Right ventricle myocardium inferior (tissue), 1 donor: ENCODE measurements at regions of chr10 and their contacts with region 1.

Region 1: DNA sequence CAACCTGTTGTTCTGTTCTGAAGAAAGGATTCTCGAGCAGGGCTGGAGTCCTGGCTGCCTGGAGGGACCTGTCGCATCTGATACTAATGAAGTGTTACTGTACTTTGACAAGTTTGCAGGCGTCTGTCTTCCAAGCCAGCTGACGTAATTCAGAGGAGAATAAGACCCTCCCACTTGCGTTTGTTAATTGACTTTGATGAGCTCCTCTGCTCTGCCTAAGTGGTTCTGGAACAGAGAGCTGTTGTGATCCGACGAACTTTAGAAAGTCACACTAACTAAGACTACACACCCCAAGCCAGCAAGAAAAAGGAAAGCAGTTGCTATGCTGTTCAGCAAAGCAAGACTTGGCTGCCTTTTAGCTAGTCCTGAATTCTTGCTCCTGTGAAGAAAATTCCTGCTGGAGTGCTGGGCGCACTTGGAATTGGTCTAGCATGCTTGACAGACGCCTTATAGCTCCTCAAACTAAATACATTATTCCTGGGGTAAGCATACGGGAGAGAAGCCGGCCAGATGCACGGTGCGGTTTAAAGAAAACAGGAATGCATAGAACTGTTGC is 200.3 kb downstream of the CACNB2 start:
- DNase-seq: no peak
- ATAC-seq: peak; percentile 89

Region 2: DNA sequence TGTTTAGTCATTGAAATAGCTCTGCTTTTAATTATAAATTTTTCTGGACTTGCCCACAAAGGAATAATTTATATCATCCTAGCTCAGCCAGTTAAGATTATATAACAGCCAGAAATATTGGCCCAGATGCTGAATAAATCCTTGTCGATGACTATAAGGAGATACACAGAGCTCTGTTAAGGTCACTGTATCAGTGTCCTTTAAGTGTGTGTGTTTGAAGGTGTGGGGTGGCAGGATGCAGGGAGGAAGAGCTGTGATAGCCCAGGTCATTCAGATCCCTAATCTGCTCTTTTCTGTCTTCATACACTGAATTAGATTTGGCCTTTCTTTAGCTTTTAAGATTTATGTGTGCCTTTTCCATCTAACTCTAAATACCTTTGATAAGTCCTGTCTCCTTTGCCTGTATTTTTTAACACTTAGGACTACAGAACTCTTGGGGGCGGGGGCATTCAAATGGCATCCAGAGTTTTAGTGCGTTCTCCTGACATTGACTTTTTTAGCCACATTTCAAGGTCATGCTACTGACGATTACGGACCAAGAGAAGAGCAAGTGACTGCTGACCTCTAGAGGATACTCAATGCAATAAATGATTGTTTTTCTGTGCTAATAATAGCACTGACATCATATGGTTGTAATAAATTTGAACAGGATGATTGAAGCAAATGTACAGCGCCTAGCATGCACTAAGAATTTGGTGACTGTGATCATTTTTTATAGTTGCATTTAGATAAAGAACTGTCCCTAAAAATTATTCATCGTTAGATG is 28.0 kb before region 1 on chr10:
- intact Hi-C with region 1: loop called (anchors 2 kb)
- DNase-seq: no peak
- ATAC-seq: peak; percentile 70

Region 3: GRCh38 chr10:18409599-18410397 is 69.2 kb after region 1 on chr10:
- intact Hi-C with region 1: loop called (anchors 5 kb)
- DNase-seq: no peak
- ATAC-seq: no peak

Region 4: GRCh38 chr10:18463673-18464211 is 123.2 kb after region 1 on chr10:
- intact Hi-C with region 1: loop called (anchors 5 kb)
- DNase-seq: no peak
- ATAC-seq: peak; percentile 88

Region 5: GRCh38 chr10:18607503-18608378 is 267.2 kb after region 1 on chr10:
- intact Hi-C with region 1: no loop called
- DNase-seq: no peak
- ATAC-seq: no peak

Region 6: DNA sequence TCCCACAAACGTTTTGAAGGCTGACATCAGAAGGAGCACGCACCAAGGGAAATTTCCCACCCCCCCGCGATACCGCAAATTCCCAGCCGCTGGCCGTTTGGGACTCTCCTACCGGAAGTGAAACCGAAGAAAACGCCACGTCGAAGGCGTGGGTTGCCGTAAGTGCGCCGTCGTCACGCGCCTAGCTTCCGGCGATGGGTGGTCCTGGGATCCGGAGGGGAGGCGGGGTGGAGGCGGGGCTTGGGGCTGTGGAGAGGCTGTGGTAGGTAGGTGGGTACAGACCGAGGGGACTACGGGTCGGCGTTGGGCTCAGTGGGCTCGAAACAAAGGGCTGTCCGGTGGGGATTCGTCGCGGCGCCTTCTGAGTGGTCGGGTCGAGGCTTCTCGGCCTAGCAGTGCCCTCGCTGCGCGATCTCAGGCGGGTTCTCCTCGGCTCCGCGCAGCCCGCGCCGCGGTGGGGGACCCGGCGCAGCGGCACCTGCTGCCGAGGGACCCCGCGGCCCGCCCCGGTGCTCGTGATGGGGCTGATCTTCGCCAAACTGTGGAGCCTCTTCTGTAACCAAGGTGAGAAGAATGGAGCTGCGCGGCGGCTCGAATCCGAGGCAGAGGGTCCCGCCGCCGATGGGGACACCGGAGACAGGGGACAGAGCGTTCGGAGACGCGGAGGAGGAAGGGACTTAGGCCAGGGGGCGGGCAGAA is 318.7 kb after region 1 on chr10 and contains the start of gene ARL5B:
- intact Hi-C with region 1: loop called (anchors 10 kb)
- DNase-seq: peak; percentile 98
- ATAC-seq: peak; percentile 100
- total RNA-seq, gene ARL5B: 6.2 TPM